MCF 10A (cell line): ENCODE measurements at regions of chr7 and their contacts with region 1.

Region 1: GRCh38 chr7:123580406-123581161 is 21.0 kb upstream of the ASB15 start:
- DNase-seq: peak; percentile 68
- H3K4me3 Mint-ChIP-seq: no peak overlapping the region
- H3K27ac Mint-ChIP-seq: no peak overlapping the region
- H3K4me1 Mint-ChIP-seq: no peaks in the 10 kb centered on the region
- H3K27me3 Mint-ChIP-seq: no peaks in the 10 kb centered on the region
- CTCF ChIP-seq: peak; percentile 66

Region 2: DNA sequence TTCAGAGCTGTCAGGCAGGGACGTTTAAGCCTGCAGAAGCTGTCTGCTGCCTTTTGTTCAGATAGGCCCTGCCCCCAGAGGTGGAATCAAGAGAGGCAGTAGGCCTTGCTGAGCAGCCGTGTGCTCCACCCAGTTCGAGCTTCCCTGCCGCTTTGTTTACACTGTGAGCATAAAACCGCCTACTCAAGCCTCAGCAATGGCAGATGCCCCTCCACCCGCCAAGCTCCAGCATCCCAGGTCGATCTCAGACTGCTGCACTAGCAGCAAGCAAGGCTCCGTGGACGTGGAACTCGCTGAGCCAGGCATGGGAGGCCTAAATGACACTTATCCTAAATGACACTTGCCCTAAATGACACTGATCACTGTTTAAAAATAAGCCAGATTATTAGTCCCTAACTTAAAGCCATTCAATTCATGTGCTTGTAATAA is 14.2 kb after region 1 on chr7:
- CTCF ChIA-PET with region 1: interaction called, 11 read pairs
- POLR2A ChIA-PET with region 1: no interaction called
- intact Hi-C with region 1: no loop called
- DNase-seq: no peak
- H3K4me3 Mint-ChIP-seq: no peak overlapping the region
- H3K27ac Mint-ChIP-seq: no peak overlapping the region
- H3K4me1 Mint-ChIP-seq: no peaks in the 10 kb centered on the region
- H3K27me3 Mint-ChIP-seq: no peaks in the 10 kb centered on the region
- CTCF ChIP-seq: no peak

Region 3: DNA sequence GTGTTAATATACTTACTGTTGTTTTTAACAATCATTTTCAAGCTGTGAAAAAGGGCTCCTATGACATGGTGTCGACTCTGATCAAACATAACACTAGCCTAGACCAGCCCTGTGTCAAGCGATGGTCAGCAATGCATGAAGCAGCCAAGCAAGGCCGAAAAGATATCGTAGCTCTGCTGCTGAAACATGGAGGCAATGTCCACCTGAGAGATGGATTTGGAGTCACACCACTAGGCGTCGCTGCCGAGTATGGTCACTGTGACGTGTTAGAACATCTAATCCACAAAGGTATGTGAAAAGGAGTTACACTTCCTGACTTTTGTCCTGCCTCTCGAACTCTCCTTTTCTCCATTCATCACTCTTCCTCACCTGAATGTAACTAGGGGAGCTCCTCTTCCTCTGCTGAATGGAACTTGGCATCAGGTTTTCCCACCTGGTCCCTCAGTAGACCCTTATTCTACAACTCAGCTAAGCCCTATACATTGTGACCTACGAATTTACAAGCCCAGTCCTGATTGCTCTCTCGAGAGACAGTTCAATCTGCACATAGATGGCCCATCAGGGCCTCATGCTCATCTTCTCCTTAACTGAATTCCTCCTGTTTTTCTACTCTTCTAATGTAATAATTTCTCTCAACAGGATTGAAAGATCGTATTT is 44.1 kb after region 1 on chr7:
- CTCF ChIA-PET with region 1: interaction called, 12 read pairs
- POLR2A ChIA-PET with region 1: interaction called, 4 read pairs
- intact Hi-C with region 1: no loop called
- DNase-seq: peak; percentile 56
- H3K4me3 Mint-ChIP-seq: no peak overlapping the region
- H3K27ac Mint-ChIP-seq: no peak overlapping the region
- H3K4me1 Mint-ChIP-seq: peaks cover 15% of the 10 kb centered on the region
- H3K27me3 Mint-ChIP-seq: no peaks in the 10 kb centered on the region
- CTCF ChIP-seq: peak; percentile 41

Region 4: GRCh38 chr7:123674399-123675180 is 94.0 kb after region 1 on chr7:
- CTCF ChIA-PET with region 1: interaction called, 6 read pairs
- POLR2A ChIA-PET with region 1: no interaction called
- intact Hi-C with region 1: loop called (anchors 2 kb)
- DNase-seq: peak; percentile 70
- H3K4me3 Mint-ChIP-seq: no peak overlapping the region
- H3K27ac Mint-ChIP-seq: peak overlapping the region; percentile 46
- H3K4me1 Mint-ChIP-seq: peaks cover 21% of the 10 kb centered on the region
- H3K27me3 Mint-ChIP-seq: no peaks in the 10 kb centered on the region
- CTCF ChIP-seq: no peak

Region 5: DNA sequence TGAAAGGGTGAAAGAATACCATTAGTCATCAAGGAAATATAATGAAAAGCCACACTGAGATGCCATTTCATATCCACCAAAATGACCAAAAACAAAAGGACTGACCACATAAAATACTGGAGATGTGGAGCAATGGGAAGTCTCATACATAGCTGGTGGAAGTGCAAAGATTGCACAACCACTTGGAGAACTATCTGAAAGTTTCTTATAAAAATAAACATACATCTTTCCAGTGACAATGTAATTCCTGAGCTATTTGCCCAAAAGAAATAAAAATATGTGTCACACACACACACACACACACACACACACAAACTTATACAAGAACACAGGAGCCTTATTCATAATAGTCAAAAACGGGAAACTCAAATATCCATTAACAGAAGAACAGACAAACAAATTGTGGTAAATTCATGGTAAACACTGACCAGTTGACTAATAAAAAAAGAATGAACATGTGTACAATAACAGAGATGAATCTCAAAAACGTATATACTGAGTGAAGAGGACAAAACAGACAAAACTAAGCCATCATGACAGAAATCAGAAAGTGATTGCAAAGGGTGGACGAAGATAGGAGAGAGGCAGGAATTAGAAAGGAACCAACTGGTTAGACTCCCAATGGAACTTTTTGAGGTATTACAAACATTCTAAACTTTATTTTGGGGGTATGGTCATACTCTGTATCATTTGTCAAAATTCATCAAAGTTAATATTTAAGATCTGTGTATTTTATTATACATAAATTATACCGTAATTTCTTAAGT is 146.7 kb after region 1 on chr7:
- CTCF ChIA-PET with region 1: no interaction called
- POLR2A ChIA-PET with region 1: no interaction called
- intact Hi-C with region 1: no loop called
- DNase-seq: peak; percentile 86
- H3K4me3 Mint-ChIP-seq: peak overlapping the region; percentile 5
- H3K27ac Mint-ChIP-seq: peak overlapping the region; percentile 20
- H3K4me1 Mint-ChIP-seq: peaks cover 17% of the 10 kb centered on the region
- H3K27me3 Mint-ChIP-seq: no peaks in the 10 kb centered on the region
- CTCF ChIP-seq: no peak

Region 6: GRCh38 chr7:123757095-123757494 is 176.5 kb after region 1 on chr7:
- CTCF ChIA-PET with region 1: no interaction called
- POLR2A ChIA-PET with region 1: no interaction called
- intact Hi-C with region 1: no loop called
- DNase-seq: peak; percentile 24
- H3K4me3 Mint-ChIP-seq: no peak overlapping the region
- H3K27ac Mint-ChIP-seq: no peak overlapping the region
- H3K4me1 Mint-ChIP-seq: peaks cover 23% of the 10 kb centered on the region
- H3K27me3 Mint-ChIP-seq: no peaks in the 10 kb centered on the region
- CTCF ChIP-seq: no peak

Region 7: DNA sequence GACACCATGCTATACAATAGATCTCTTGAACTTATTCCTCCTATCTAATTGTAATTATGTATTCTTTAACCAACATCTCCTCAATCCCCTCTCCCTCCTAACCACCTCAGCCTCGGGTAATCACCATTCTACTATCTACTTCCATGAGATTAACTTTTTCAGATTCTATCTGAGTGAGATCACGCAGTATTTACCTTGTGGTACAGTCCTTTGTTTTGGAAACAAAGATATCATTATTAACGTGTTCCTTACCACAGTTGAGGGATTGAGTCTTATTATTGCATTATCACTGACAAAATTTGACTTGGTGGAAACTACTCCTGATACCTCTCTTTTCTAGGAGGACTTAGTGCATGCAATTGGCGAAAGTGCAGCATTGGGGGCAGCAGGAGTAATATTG is 238.4 kb after region 1 on chr7:
- CTCF ChIA-PET with region 1: no interaction called
- POLR2A ChIA-PET with region 1: no interaction called
- intact Hi-C with region 1: no loop called
- DNase-seq: no peak
- H3K4me3 Mint-ChIP-seq: no peak overlapping the region
- H3K27ac Mint-ChIP-seq: peak overlapping the region; percentile 63
- H3K4me1 Mint-ChIP-seq: peaks cover 6% of the 10 kb centered on the region
- H3K27me3 Mint-ChIP-seq: no peaks in the 10 kb centered on the region
- CTCF ChIP-seq: no peak

Region 8: GRCh38 chr7:123871998-123872867 is 291.6 kb after region 1 on chr7:
- CTCF ChIA-PET with region 1: interaction called, 22 read pairs
- POLR2A ChIA-PET with region 1: no interaction called
- intact Hi-C with region 1: loop called (anchors 1 kb)
- DNase-seq: peak; percentile 72
- H3K4me3 Mint-ChIP-seq: no peak overlapping the region
- H3K27ac Mint-ChIP-seq: no peak overlapping the region
- H3K4me1 Mint-ChIP-seq: no peaks in the 10 kb centered on the region
- H3K27me3 Mint-ChIP-seq: no peaks in the 10 kb centered on the region
- CTCF ChIP-seq: peak; percentile 48

Region 9: DNA sequence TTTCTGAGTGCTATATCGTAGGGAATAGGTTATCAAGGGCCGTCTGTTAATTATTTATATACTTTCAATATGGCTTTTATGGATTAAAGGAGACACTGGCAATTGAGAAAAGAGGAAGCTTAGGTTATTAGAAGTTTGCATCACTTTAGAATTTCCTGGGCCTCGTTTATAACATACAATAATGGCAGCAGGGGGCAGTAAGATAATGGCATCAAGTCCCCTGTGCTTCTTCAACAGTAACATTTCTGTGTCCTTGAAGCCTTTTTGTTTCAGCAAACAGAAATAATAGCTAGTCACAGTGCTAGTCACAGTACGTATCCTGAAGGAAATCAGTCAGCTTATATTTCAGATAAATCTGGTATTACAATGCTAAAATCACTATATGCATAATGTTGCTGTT is 386.4 kb after region 1 on chr7:
- CTCF ChIA-PET with region 1: no interaction called
- POLR2A ChIA-PET with region 1: no interaction called
- intact Hi-C with region 1: no loop called
- DNase-seq: no peak
- H3K4me3 Mint-ChIP-seq: no peak overlapping the region
- H3K27ac Mint-ChIP-seq: no peak overlapping the region
- H3K4me1 Mint-ChIP-seq: no peaks in the 10 kb centered on the region
- H3K27me3 Mint-ChIP-seq: no peaks in the 10 kb centered on the region
- CTCF ChIP-seq: no peak